ENCODE measurements at regions of chr7 and their contacts with region 1.

Region 1: GRCh38 chr7:102925976-102926782 is 13.4 kb downstream of the LRRC17 start:
- DNase-seq: peak; percentile 19

Region 2: GRCh38 chr7:102991540-102992214 is 65.5 kb after region 1 on chr7:
- in situ Hi-C with region 1: loop called (anchors 10 kb)
- DNase-seq: peak; percentile 86

Region 3: GRCh38 chr7:103462358-103462757 is 536.2 kb after region 1 on chr7:
- in situ Hi-C with region 1: no loop called
- DNase-seq: no peak